GM12878 (cell line): ENCODE measurements at regions of chr16 and their contacts with region 1.

Region 1: DNA sequence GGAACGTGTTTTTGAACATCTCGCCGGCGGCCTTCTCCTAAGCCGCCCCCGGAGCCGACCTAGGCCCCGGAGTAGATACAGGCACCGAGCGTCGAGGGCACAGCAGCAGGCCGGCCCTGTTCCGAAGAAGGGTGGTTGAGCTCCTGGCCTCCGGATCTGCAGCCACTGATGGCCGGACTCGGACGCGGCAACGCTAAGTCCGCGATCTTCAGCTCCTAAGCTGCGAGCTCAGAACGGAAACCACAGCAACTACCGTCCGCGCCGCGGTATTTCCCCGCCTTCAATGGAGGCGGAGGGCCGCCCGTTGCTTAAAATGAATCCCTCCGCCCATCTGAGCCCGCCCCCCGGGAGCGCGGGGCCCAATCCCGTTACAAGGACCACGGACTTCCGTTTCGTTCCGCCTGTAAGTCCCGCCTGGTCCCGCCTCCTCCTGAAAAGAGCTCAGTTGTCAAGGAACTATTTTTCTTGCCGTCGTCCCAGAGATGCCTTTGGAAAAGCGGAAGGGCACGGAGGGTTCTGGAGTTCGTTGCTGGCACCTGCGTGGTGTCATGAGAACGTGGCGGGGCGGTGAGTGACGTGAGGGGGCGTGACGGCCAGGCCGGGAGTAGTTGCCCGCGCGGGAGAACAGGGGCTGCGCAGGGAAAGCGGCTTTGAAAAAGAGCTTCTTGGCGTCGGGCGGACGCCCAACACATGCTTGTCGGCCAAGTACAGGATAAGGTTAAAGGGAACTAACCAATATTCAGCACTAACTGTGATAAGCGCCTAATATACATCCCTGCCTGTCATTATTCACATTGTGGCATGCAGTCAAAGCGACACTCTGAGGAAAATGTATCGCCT is at the start of gene CFAP20:
- DNase-seq: peak; percentile 98
- ATAC-seq: peak; percentile 87
- H3K4me3 ChIP-seq: peak within 1 kb of the TSS; percentile 85
- H3K27ac ChIP-seq: peak within 1 kb of the TSS; percentile 82
- H3K4me1 ChIP-seq: peaks cover 9% of the 10 kb centered on the region
- H3K27me3 ChIP-seq: no peaks in the 10 kb centered on the region
- CTCF ChIP-seq: no peak
- EP300 ChIP-seq: 0 out of 4 replicates have a peak, but pooled peaks of 1 of the 2 experiments have one; percentile 7
- POLR2A ChIP-seq: peak; percentile 97
- RAD21 ChIP-seq: no peak
- polyA plus RNA-seq, gene CFAP20: 10.9 to 19.9 TPM

Region 2: DNA sequence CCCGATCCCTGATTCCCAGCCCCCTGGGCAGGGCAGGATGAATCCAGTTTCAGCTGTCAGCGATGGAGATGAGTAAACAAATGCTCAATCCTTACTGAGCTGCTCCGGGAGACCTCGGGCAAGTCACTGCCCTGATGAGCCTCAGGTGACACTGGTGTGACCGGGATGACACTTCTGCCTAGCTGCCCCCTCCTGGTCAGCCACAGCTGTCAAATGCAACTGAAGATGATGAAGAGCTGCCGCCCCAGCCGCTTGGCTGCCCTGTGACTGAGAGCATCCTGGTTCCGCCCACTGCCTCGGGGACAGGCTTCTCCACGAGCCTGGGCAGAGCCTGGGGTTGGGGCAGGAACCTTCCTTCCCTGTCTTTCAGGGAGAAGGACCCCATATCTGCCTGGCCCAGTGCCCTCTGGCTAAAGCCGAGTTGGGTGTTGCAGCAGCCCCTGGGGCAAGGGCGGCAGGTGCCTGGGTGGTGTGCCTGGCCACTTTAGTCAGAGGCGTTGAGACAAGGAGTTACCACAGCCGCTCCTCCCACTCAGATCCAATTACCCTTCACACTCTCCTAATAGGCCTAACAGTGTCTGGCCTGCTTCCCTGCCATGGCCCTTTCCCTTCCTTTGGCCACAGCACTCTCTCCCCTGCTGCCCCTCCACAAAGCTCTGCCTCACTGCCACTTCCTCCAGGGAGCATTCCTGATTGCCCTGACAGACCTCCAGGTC is 719.3 kb before region 1 on chr16:
- CTCF ChIA-PET with region 1: no interaction called
- POLR2A ChIA-PET with region 1: no interaction called
- RAD21 ChIA-PET with region 1: no interaction called
- SMC1A ChIA-PET with region 1: no interaction called
- in situ Hi-C with region 1: no loop called
- intact Hi-C with region 1: no loop called
- DNase-seq: no peak
- ATAC-seq: no peak
- H3K4me3 ChIP-seq: no peak overlapping the region
- H3K27ac ChIP-seq: no peak overlapping the region
- H3K4me1 ChIP-seq: peaks cover 37% of the 10 kb centered on the region
- H3K27me3 ChIP-seq: no peaks in the 10 kb centered on the region
- CTCF ChIP-seq: no peak
- EP300 ChIP-seq: no peak
- POLR2A ChIP-seq: no peak
- RAD21 ChIP-seq: no peak

Region 3: DNA sequence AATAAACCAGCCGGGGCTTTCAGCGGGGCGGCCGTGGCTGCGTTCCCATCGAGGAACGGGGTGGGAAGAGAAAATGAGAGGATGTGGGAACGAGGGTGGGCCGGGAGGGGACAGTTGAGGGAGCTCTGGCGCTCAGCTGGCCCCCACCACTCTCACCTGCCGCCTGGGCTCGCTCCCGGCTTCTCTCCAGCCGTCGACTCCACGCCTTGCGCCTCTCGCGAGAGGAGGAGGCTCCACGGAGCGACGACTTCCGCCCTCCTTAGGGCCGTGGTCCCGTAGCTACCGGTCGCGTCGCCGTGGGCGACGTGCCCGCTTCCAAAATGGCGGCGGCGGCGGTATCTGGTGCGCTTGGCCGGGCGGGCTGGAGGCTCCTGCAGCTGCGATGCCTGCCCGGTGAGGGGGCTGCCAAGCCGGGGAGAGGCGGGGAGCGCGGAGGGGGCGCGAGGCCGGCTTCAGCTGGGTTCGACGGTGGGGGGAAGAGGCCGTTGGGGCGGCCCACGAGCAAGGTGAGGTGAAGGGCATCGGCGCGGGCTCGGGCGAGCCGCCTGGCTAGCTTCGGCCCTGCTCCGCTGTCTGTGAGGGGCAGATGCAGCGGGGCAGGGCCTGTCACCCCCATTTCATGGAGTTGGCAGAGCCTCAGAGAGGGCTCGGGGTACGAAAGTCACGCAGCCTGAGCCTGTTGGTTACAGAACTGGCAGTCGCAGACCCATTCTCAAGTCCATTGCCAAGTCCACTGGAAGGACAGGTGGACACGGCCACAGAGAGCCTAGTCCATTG is 681.9 kb before region 1 on chr16 and contains the starts of genes CIAPIN1 and COQ9:
- CTCF ChIA-PET with region 1: no interaction called
- POLR2A ChIA-PET with region 1: no interaction called
- RAD21 ChIA-PET with region 1: no interaction called
- SMC1A ChIA-PET with region 1: no interaction called
- in situ Hi-C with region 1: no loop called
- intact Hi-C with region 1: loop called (anchors 10 kb)
- DNase-seq: peak; percentile 74
- ATAC-seq: peak; percentile 99
- H3K4me3 ChIP-seq: peak within 1 kb of the TSS; percentile 97
- H3K27ac ChIP-seq: peak within 1 kb of the TSS; percentile 88
- H3K4me1 ChIP-seq: peaks cover 6% of the 10 kb centered on the region; the same call in 1 of the 2 replicates
- H3K27me3 ChIP-seq: no peaks in the 10 kb centered on the region
- CTCF ChIP-seq: no peak
- EP300 ChIP-seq: 0 out of 4 replicates have a peak, but pooled peaks of 1 of the 2 experiments have one; percentile 8
- POLR2A ChIP-seq: peak; percentile 92
- RAD21 ChIP-seq: no peak
- polyA plus RNA-seq, gene CIAPIN1: 118 to 150 TPM
- polyA plus RNA-seq, gene COQ9: 24.1 to 32.7 TPM

Region 4: GRCh38 chr16:58018804-58019203 is 110.5 kb before region 1 on chr16:
- CTCF ChIA-PET with region 1: interaction called, 21 read pairs
- POLR2A ChIA-PET with region 1: no interaction called
- RAD21 ChIA-PET with region 1: interaction called, 7 read pairs
- SMC1A ChIA-PET with region 1: interaction called, 10 read pairs
- in situ Hi-C with region 1: loop called (anchors 5 kb)
- intact Hi-C with region 1: loop called (anchors 2 kb)
- DNase-seq: no peak
- ATAC-seq: no peak
- H3K4me3 ChIP-seq: no peak overlapping the region
- H3K27ac ChIP-seq: no peak overlapping the region
- H3K4me1 ChIP-seq: no peaks in the 10 kb centered on the region
- H3K27me3 ChIP-seq: no peaks in the 10 kb centered on the region
- CTCF ChIP-seq: 0 out of 6 replicates have a peak, but pooled peaks of 1 of the 3 experiments have one; percentile 7
- EP300 ChIP-seq: no peak
- POLR2A ChIP-seq: no peak
- RAD21 ChIP-seq: no peak

Region 5: GRCh38 chr16:58098207-58099096 is 30.9 kb before region 1 on chr16:
- CTCF ChIA-PET with region 1: interaction called, 186 read pairs
- POLR2A ChIA-PET with region 1: interaction called, 7 read pairs
- RAD21 ChIA-PET with region 1: interaction called, 30 read pairs
- SMC1A ChIA-PET with region 1: interaction called, 25 read pairs
- in situ Hi-C with region 1: no loop called
- intact Hi-C with region 1: no loop called
- DNase-seq: no peak
- ATAC-seq: no peak
- H3K4me3 ChIP-seq: no peak overlapping the region
- H3K27ac ChIP-seq: no peak overlapping the region
- H3K4me1 ChIP-seq: no peaks in the 10 kb centered on the region
- H3K27me3 ChIP-seq: no peaks in the 10 kb centered on the region
- CTCF ChIP-seq: no peak
- EP300 ChIP-seq: no peak
- POLR2A ChIP-seq: no peak
- RAD21 ChIP-seq: no peak

Region 6: GRCh38 chr16:58243528-58244004 is 114.2 kb after region 1 on chr16:
- CTCF ChIA-PET with region 1: interaction called, 19 read pairs
- POLR2A ChIA-PET with region 1: interaction called, 8 read pairs
- RAD21 ChIA-PET with region 1: interaction called, 21 read pairs
- SMC1A ChIA-PET with region 1: interaction called, 12 read pairs
- in situ Hi-C with region 1: no loop called
- intact Hi-C with region 1: loop called (anchors 2 kb)
- DNase-seq: peak; percentile 91
- ATAC-seq: peak; percentile 90
- H3K4me3 ChIP-seq: peak overlapping the region; percentile 52; the same call in 1 of the 2 replicates
- H3K27ac ChIP-seq: peak overlapping the region; percentile 81
- H3K4me1 ChIP-seq: peaks cover 32% of the 10 kb centered on the region
- H3K27me3 ChIP-seq: no peaks in the 10 kb centered on the region
- CTCF ChIP-seq: peak; percentile 15 to 27 (median 25); a peak in 4 of 6 replicates
- EP300 ChIP-seq: peak; percentile 96 to 100
- POLR2A ChIP-seq: 0 out of 2 replicates have a peak, but pooled peaks have one; percentile 22
- RAD21 ChIP-seq: peak; percentile 28; the same call in 1 of the 2 replicates

Region 7: DNA sequence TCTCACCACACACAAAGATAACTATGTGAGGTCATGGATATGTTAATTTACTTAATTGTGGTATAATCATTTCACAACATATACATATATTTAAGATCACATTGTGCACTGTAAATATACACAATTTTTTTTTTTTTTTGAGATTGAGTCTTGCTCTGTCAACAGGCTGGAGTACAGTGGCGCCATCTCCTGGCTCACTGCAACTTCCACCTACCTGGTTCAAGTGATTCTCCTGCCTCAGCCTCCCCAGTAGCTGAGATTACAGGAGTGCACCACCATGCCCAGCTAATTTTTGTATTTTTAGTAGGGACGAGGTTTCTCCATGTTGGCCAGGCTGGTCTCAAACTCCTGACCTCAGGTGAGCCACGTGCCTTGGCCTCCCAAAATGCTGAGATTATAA is 177.0 kb after region 1 on chr16:
- CTCF ChIA-PET with region 1: interaction called, 38 read pairs
- POLR2A ChIA-PET with region 1: no interaction called
- RAD21 ChIA-PET with region 1: interaction called, 4 read pairs
- SMC1A ChIA-PET with region 1: interaction called, 10 read pairs
- in situ Hi-C with region 1: no loop called
- intact Hi-C with region 1: loop called (anchors 5 kb)
- DNase-seq: no peak
- ATAC-seq: peak; percentile 71
- H3K4me3 ChIP-seq: no peak overlapping the region
- H3K27ac ChIP-seq: no peak overlapping the region
- H3K4me1 ChIP-seq: no peaks in the 10 kb centered on the region
- H3K27me3 ChIP-seq: no peaks in the 10 kb centered on the region
- CTCF ChIP-seq: peak; percentile 46 to 67 (median 54)
- EP300 ChIP-seq: no peak
- POLR2A ChIP-seq: no peak
- RAD21 ChIP-seq: peak; percentile 59